ENCODE measurements at regions of chr18 and their contacts with region 1.

Region 1: DNA sequence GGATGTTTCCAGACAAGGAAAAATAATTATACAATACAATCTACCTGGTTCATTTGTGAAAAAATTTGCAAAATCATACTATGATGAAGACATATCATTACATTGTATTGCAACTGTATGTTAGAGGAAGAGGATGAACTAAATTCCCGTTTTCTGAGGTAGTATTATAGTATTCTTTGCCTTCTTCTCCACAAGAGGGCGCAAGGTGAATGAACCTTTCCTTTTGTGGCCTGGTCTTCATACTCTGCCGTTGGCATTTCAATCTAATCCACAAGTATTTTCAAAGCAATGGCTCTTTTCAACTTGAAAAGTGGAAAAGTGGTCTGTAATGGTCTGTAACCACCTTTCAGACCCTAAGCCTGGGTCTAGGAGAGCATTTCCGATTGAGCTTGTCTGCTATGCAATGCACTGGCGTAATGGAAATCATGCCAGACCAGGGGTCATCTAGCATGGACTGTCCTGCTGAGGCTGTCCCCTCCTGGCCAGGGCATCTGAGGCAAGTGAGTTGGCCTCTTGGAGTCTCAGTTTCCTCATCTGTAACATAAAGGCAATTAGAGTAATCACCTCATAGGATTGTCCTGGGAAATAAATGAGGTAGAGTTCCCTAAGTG is 30.8 kb upstream of the ZNF396 start:
- DNase-seq: peak; percentile 83
- H3K4me3 Mint-ChIP-seq: no peak overlapping the region
- H3K27ac Mint-ChIP-seq: no peak overlapping the region
- H3K4me1 Mint-ChIP-seq: peaks cover 12% of the 10 kb centered on the region
- H3K27me3 Mint-ChIP-seq: peaks cover 5% of the 10 kb centered on the region

Region 2: GRCh38 chr18:35143622-35144596 is 264.1 kb before region 1 on chr18:
- intact Hi-C with region 1: no loop called
- DNase-seq: peak; percentile 74
- H3K4me3 Mint-ChIP-seq: no peak overlapping the region
- H3K27ac Mint-ChIP-seq: no peak overlapping the region
- H3K4me1 Mint-ChIP-seq: peaks cover 3% of the 10 kb centered on the region
- H3K27me3 Mint-ChIP-seq: no peaks in the 10 kb centered on the region

Region 3: DNA sequence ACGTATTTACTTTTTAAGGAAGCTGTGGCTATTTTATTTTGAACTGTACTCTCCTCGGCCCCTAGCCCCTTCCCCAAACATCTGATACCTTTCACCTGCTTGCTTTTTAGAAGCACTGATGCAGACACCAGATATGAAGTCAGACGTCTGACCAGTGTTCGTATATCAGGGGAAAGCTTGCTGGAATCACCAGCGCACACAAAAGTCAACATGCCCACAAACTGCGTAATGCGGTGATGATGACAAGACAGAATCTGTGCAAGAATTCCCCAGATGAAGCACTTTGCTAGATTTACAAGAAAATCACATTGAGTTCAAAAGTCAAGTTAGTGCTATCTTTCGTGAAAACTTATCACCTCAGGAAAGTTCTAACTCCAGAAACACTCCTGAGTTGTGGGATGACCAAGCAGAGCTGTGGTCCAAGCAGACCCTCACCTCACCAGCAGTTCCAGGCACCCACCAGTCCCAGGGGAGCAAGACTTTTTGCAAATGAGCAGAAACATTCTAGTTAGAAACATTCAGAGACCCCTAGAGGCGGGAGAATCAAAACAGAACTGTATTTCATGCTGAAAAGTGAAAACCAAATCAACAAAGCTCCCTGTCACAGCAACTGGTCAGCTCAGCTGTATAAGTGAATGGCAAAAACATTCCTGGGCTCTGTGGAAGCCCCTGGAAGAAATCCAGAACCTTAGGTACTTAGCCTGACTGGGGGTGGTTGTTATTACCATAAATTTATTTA is 34.0 kb after region 1 on chr18:
- intact Hi-C with region 1: no loop called
- DNase-seq: no peak
- H3K4me3 Mint-ChIP-seq: no peak overlapping the region
- H3K27ac Mint-ChIP-seq: no peak overlapping the region
- H3K4me1 Mint-ChIP-seq: peaks cover 4% of the 10 kb centered on the region
- H3K27me3 Mint-ChIP-seq: peaks cover 3% of the 10 kb centered on the region

Region 4: GRCh38 chr18:35580701-35581539 is 172.9 kb after region 1 on chr18:
- intact Hi-C with region 1: loop called (anchors 5 kb)
- DNase-seq: peak; percentile 86
- H3K4me3 Mint-ChIP-seq: peak overlapping the region; percentile 73
- H3K27ac Mint-ChIP-seq: peak overlapping the region; percentile 66
- H3K4me1 Mint-ChIP-seq: peaks cover 22% of the 10 kb centered on the region
- H3K27me3 Mint-ChIP-seq: peaks cover 12% of the 10 kb centered on the region

Region 5: DNA sequence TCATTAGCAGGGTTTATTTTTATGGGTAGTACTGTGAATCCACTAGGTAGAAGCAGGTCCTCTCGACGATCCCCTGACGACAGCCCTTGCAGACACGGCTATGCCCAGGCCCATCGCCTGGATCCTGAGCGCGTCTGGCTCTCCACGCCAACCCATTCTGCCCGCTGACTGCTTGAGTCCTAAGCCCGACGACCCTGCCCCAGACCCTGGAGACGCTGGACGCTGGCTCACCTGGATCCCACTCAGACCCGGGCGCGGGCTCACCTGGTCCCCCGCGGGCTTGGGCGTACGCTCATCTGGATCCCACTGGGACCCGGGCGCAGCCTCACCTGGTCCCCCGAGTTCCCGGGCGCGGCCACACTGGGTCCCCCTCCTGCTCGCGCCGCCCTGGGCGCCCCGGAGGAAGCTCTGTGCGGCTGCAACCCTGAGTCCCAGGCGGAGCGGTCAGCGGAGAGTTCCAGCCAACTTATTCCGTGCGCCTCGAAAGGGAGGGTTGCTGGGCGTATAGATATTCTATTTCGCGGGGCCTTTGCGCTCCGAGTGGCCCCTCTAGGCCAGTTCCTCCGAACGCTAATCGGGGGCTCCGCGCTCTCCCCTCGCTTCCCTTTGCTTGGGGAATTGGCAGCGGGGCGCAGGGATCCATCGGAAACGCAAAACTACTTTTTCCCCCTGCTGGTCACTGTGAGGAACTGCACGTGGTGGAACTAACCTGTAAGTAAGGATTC is 542.1 kb after region 1 on chr18:
- intact Hi-C with region 1: loop called (anchors 5 kb)
- DNase-seq: peak; percentile 88
- H3K4me3 Mint-ChIP-seq: peak overlapping the region; percentile 86
- H3K27ac Mint-ChIP-seq: no peak overlapping the region
- H3K4me1 Mint-ChIP-seq: peaks cover 4% of the 10 kb centered on the region
- H3K27me3 Mint-ChIP-seq: peaks cover 18% of the 10 kb centered on the region